ENCODE measurements at regions of chr12 and their contacts with region 1.

Region 1: GRCh38 chr12:46153268-46153872 is 115.5 kb downstream of the SLC38A1 start:
- DNase-seq: peak; percentile 7
- ATAC-seq: no peak
- H3K4me3 ChIP-seq: no peak overlapping the region
- H3K27ac ChIP-seq: no peak overlapping the region
- H3K4me1 ChIP-seq: no peaks in the 10 kb centered on the region
- H3K27me3 ChIP-seq: 0 out of 5 replicates have a peak, but pooled peaks cover 0 to 4% of the 10 kb centered on the region in 2 experiments
- CTCF ChIP-seq: peak; percentile 46
- EP300 ChIP-seq: no peak
- POLR2A ChIP-seq: no peak
- RAD21 ChIP-seq: no peak

Region 2: DNA sequence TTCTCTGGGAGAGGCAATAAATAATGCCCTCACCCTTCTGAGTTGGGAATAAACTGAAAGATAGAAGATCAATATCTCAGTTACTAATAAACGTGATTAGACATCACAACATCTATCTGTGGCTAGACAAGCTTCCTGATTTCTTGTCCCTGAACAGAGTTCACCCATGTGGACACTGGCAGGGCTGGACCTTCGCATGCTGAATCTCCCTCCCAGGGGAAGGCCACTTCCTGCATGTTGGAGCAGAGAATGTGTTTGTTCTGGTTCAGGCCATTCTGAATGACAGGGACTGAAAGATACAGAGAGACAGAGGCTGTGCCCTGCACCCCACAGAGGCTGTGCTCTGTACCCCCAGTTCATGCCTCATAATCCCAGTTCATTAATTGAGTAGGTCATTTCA is 17.1 kb before region 1 on chr12:
- CTCF ChIA-PET with region 1: no interaction called
- POLR2A ChIA-PET with region 1: no interaction called
- in situ Hi-C with region 1: no loop called
- intact Hi-C with region 1: no loop called
- DNase-seq: no peak
- ATAC-seq: peak; percentile 46; the same call in 1 of the 3 replicates
- H3K4me3 ChIP-seq: no peak overlapping the region
- H3K27ac ChIP-seq: no peak overlapping the region
- H3K4me1 ChIP-seq: no peaks in the 10 kb centered on the region
- H3K27me3 ChIP-seq: peaks cover 0 to 4% of the 10 kb centered on the region in 2 experiments; a peak in 1 of 5 replicates
- CTCF ChIP-seq: no peak
- EP300 ChIP-seq: no peak
- POLR2A ChIP-seq: no peak
- RAD21 ChIP-seq: no peak

Region 3: GRCh38 chr12:46303039-46303666 is 149.8 kb after region 1 on chr12:
- CTCF ChIA-PET with region 1: no interaction called
- POLR2A ChIA-PET with region 1: no interaction called
- in situ Hi-C with region 1: no loop called
- intact Hi-C with region 1: loop called (anchors 10 kb)
- DNase-seq: peak; percentile 27
- ATAC-seq: peak; percentile 71
- H3K4me3 ChIP-seq: no peak overlapping the region
- H3K27ac ChIP-seq: no peak overlapping the region
- H3K4me1 ChIP-seq: no peaks in the 10 kb centered on the region
- H3K27me3 ChIP-seq: no peaks in the 10 kb centered on the region; a peak in 2 of 5 replicates
- CTCF ChIP-seq: peak; percentile 62
- EP300 ChIP-seq: no peak
- POLR2A ChIP-seq: no peak
- RAD21 ChIP-seq: no peak